ENCODE measurements at regions of chr4 and their contacts with region 1.

Region 1: DNA sequence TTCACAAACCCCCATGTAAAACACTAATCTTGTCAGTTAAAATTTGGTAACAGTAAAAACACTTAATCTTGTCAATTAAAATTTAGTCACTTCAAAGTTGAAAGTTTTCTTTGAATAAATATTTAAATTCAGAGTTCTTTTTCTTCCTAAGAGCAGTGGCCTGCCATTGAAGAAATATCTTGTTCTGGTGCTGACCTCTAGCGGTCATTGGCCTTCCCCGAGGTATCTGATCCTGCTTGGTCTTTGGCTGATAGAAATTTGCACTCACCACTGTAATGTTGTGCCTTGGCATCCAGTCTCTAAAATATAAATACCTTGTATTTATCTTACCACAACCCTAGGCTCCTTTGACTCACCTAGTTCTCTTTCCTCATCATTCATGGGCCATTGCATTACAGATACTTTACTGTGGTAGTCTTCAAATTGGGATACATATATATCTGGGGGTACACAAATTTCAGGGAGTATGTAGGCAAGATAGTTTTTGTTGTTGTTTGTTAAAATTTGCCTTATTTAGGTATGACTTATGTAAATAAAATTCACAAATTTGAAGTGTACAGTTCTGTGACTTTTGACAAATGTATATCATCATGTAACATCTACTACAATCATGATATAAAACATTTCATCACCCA is 6.7 kb upstream of the ART3 start:
- DNase-seq: no peak
- H3K4me3 ChIP-seq: no peak overlapping the region
- H3K27ac ChIP-seq: no peak overlapping the region
- H3K4me1 ChIP-seq: no peaks in the 10 kb centered on the region
- H3K27me3 ChIP-seq: no peaks in the 10 kb centered on the region
- CTCF ChIP-seq: peak; percentile 53 to 79 (median 71)
- POLR2A ChIP-seq: no peak

Region 2: GRCh38 chr4:75995727-75996126 is 72.0 kb before region 1 on chr4:
- intact Hi-C with region 1: loop called (anchors 5 kb)
- DNase-seq: no peak
- H3K4me3 ChIP-seq: no peak overlapping the region
- H3K27ac ChIP-seq: no peak overlapping the region
- H3K4me1 ChIP-seq: no peaks in the 10 kb centered on the region
- H3K27me3 ChIP-seq: no peaks in the 10 kb centered on the region
- CTCF ChIP-seq: peak; percentile 42 to 65 (median 52)
- POLR2A ChIP-seq: no peak

Measured in vagina (tissue), 2 donors.